CD8-positive, alpha-beta T cell (primary cell): ENCODE measurements at regions of chr19 and their contacts with region 1.

Region 1: DNA sequence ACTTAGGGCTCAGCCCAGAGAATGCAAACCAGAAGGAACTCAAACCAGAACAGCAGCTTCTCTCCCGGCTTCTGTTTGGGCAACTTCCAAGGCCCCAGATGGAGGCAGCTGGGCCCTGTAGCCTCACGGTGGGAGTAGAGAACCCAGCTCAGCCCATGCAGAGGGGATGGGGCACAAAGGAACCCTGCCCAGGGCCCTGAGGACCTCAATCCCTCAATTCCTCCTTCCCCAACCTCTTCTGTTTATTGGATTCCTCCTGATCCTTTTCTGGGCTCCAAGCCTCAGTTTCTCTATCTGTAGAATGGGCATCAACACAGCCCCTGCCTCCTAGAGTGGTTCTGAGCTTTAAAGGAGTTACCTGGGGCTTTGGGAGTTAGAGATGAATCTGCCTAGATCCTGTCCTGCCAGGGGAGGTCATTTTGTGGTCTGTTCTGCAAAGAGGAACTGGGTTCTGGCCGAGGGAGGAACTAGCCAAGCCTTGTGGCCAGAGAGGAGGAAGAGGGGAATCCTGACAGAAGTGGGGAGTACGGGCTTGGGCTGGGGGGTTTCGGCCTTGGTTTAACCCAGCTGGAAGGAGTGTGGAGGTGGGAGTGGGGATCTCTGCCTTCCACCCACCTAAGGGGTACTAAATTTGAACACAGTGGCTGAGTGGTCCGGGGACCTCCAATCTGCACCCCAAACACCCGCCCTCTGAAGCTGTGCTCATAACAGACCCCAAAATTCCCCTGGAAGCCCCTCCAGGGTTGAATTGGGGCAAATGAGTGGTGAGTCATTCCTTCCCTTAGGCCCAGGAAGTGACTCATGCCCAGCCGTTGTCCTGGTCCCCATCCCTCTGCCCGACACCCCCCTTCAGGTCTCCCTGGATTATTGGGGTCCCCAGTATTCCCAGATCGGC is 2.7 kb downstream of the ADGRE5 start:
- DNase-seq: peak in 7 of 9 experiments; percentile 52 to 89 (median 73)
- ATAC-seq: peak; percentile 10
- H3K4me3 ChIP-seq: peak overlapping the region; percentile 69 to 82
- H3K4me3 Mint-ChIP-seq: peak overlapping the region; percentile 90
- H3K27ac ChIP-seq: peak overlapping the region; percentile 75 to 97
- H3K27ac Mint-ChIP-seq: peak overlapping the region; percentile 94
- H3K4me1 ChIP-seq: peaks cover 39% of the 10 kb centered on the region
- H3K4me1 Mint-ChIP-seq: peaks cover 41% of the 10 kb centered on the region
- H3K27me3 ChIP-seq: no peaks in the 10 kb centered on the region
- H3K27me3 Mint-ChIP-seq: no peaks in the 10 kb centered on the region
- CTCF ChIP-seq: no peak

Region 2: GRCh38 chr19:14366498-14366915 is 17.4 kb before region 1 on chr19:
- CTCF ChIA-PET with region 1: interaction called, 118 read pairs
- POLR2A ChIA-PET with region 1: interaction called, 46 read pairs
- intact Hi-C with region 1: loop called (anchors 1 kb)
- DNase-seq: peak; percentile 83 to 97 (median 90)
- ATAC-seq: peak; percentile 45
- H3K4me3 ChIP-seq: no peak overlapping the region
- H3K4me3 Mint-ChIP-seq: peak overlapping the region; percentile 57
- H3K27ac ChIP-seq: peak overlapping the region; percentile 98 to 100
- H3K27ac Mint-ChIP-seq: peak overlapping the region; percentile 99
- H3K4me1 ChIP-seq: peaks cover 81% of the 10 kb centered on the region
- H3K4me1 Mint-ChIP-seq: peaks cover 68% of the 10 kb centered on the region
- H3K27me3 ChIP-seq: no peaks in the 10 kb centered on the region
- H3K27me3 Mint-ChIP-seq: no peaks in the 10 kb centered on the region
- CTCF ChIP-seq: no peak